Lower leg skin (tissue), 4 donors: ENCODE measurements at regions of chr20 and their contacts with region 1.

Region 1: GRCh38 chr20:24992487-24993205 is at the start of gene APMAP:
- DNase-seq: peak; percentile 93 to 99
- H3K4me3 ChIP-seq: peak within 1 kb of the TSS; percentile 89
- CTCF ChIP-seq: no peak
- POLR2A ChIP-seq: peak in 1 of 2 donors; percentile 84
- total RNA-seq, gene APMAP: 34.4 to 88.7 (median 52.6) TPM

Region 2: DNA sequence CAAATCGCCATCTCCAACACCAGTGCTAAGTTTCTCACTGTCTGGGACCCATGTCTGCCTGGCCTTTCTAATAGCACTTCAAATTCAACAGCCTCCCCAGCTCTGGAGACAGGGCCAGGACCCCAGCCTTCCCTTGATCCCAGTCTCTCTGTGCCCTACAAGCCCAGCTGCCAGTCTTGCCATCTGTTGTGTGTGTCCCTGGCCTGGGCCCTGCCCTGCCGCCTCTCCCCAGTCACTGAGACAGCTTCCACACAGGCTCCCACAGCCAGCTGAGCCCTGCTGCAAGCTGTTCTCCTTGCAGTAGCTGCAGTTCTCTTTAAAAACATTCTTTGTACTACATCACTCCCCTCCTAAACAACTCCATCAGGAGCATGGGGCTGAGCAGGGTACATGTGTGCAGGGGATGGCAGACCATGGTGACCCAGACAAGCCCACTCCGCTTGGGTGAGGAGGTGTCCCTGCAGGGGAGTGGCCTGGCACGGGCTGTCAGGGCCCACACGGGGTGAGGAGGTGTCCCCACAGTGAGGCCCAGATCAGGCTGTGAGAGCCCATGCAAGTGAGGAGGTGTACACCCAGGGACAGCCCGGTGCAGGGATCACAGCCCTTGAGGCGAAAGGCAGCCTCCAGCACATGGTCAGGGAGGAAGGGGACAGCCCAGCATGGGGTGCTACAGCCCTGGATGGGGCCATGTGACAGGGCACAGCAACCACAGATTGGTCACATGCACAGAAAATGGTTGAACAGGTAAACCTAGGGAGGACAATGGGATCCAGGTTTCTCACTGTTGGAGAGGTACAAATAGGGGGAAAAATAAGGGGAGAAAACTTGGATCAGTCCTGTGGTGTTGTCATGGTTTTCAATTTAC is 27.3 kb before region 1 on chr20:
- intact Hi-C with region 1: no loop called
- DNase-seq: peak in 1 of 2 donors; percentile 76
- H3K4me3 ChIP-seq: no peak overlapping the region
- CTCF ChIP-seq: no peak
- POLR2A ChIP-seq: no peak

Region 3: GRCh38 chr20:25065625-25066338 is 73.1 kb after region 1 on chr20:
- intact Hi-C with region 1: loop called (anchors 2 kb)
- DNase-seq: peak; percentile 74 to 94
- H3K4me3 ChIP-seq: no peak overlapping the region
- CTCF ChIP-seq: peak in 1 of 3 donors; percentile 73
- POLR2A ChIP-seq: no peak

Region 4: GRCh38 chr20:25390538-25391528 is 398.2 kb after region 1 on chr20 and contains the start of gene ABHD12:
- intact Hi-C with region 1: loop called (anchors 10 kb)
- DNase-seq: peak; percentile 95 to 99
- H3K4me3 ChIP-seq: peak within 1 kb of the TSS; percentile 75
- CTCF ChIP-seq: no peak
- POLR2A ChIP-seq: no peak
- total RNA-seq, gene ABHD12: 51.7 to 121 (median 103) TPM

Region 5: GRCh38 chr20:25696384-25697131 is 703.9 kb after region 1 on chr20 and contains the start of gene ZNF337:
- intact Hi-C with region 1: loop called (anchors 10 kb)
- DNase-seq: peak; percentile 91 to 98
- H3K4me3 ChIP-seq: peak within 1 kb of the TSS; percentile 87
- CTCF ChIP-seq: peak in 1 of 3 donors; percentile 12
- POLR2A ChIP-seq: no peak
- total RNA-seq, gene ZNF337: 10.7 to 18.9 (median 13.4) TPM